Activated CD4-positive, alpha-beta T cell treated with anti-CD3 and anti-CD28 coated beads for 36 hours (primary cell): ENCODE measurements at regions of chr18 and their contacts with region 1.

Region 1: DNA sequence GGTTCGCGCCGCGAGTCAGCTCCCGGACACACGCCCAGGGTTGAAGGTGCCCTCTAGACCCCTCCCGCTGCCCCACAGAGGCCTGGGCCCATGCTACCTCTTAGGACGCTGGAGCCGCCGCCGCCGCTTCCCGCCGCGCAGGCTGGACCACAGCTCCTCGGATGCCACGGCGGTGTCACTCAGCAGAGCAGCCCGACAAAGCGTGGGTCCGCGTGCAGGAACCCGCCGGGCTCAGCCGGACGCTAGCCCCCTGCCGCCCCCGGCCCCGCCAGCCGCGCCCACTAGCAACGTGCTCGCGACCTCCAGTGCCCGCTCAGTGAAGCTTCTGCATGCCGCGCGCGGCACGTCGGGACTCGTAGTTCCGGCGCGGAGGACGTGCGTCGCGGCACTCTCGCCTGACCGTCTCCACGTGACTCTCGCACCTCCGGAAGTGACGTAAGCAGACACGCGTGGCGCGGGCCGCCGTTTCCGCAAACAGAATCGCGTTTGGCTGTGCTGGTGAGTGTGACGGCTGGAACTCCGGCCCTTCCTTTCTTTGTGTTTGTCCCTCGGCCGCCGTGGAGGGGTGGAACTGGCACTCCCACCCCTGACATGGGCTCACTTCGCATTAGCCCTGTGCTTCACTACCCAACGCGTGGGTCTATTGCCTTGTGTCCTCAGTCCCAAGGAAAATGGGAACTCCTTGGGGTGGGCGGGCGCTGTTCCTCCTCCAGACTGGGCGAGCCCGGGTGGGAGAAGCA is at the starts of genes FAM210A and RNMT:
- DNase-seq: peak; percentile 97
- ATAC-seq: peak; percentile 94
- H3K4me3 Mint-ChIP-seq: peak within 1 kb of the TSS; percentile 84
- H3K27ac Mint-ChIP-seq: peak within 1 kb of the TSS; percentile 96
- H3K4me1 Mint-ChIP-seq: peaks cover 50% of the 10 kb centered on the region
- H3K27me3 Mint-ChIP-seq: no peaks in the 10 kb centered on the region
- total RNA-seq, gene FAM210A: 46.8 to 56.4 TPM
- total RNA-seq, gene RNMT: 61.2 to 64.3 TPM

Region 2: GRCh38 chr18:12702221-12703095 is 1023.9 kb before region 1 on chr18 and contains the starts of genes CEP76 and PSMG2:
- CTCF ChIA-PET with region 1: no interaction called
- POLR2A ChIA-PET with region 1: no interaction called
- intact Hi-C with region 1: loop called in 1 of 2 experiments (anchors 2 kb)
- DNase-seq: peak; percentile 90
- ATAC-seq: peak; percentile 85
- H3K4me3 Mint-ChIP-seq: peak within 1 kb of the TSS; percentile 96
- H3K27ac Mint-ChIP-seq: peak within 1 kb of the TSS; percentile 96
- H3K4me1 Mint-ChIP-seq: peaks cover 30% of the 10 kb centered on the region
- H3K27me3 Mint-ChIP-seq: no peaks in the 10 kb centered on the region
- total RNA-seq, gene CEP76: 12.5 to 13.9 TPM
- total RNA-seq, gene PSMG2: 113 to 118 TPM

Region 3: DNA sequence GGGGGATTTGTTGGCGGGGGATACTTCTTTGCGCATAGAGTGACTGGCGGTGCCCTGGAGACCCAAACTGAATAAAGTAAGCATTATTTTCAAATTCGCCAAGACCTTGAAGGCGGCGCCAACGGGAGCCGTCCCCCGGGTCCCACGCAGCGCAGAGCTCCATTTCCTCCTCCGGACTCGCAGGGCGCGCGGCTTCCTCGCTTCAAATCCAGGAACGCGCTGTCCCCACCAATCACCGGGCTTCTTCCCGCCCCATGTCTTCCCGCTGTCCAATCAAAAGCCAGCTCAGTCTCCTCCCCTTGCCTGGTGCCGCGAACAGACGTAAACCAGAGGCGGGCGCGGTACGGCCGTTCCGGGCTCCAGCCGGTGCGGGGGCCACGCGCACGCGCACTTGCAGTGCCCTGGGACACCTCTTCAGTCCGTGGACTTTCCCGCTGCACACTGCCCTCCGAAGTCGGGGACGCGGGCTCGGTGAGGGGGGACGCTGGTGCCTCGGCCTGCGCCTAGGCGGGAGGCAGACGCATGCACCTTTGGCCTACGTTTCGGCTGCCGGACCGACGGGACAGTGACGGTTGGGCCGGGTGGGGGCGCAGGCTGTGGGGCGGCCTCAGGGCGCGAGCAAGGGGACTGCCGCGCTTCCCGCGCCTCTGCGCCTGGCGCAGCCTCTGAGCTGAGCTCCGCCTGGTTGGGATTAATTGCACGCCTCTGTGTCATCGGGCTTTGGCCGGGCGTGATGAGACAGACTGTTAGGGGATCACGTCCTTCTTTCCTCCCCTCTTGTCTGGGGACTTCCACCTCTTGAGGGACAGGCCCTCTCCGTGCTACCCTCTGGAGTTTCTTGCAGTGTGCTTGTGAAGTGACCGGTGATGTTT is 735.2 kb before region 1 on chr18 and contains the start of gene CEP192:
- CTCF ChIA-PET with region 1: no interaction called
- POLR2A ChIA-PET with region 1: no interaction called
- intact Hi-C with region 1: loop called in 1 of 2 experiments (anchors 1 kb)
- DNase-seq: peak; percentile 98
- ATAC-seq: peak; percentile 90
- H3K4me3 Mint-ChIP-seq: peak within 1 kb of the TSS; percentile 87
- H3K27ac Mint-ChIP-seq: peak within 1 kb of the TSS; percentile 93
- H3K4me1 Mint-ChIP-seq: peaks cover 21% of the 10 kb centered on the region
- H3K27me3 Mint-ChIP-seq: no peaks in the 10 kb centered on the region
- total RNA-seq, gene CEP192: 36.0 to 39.3 TPM

Region 4: GRCh38 chr18:13216092-13216582 is 510.3 kb before region 1 on chr18:
- CTCF ChIA-PET with region 1: interaction called, 4 read pairs
- POLR2A ChIA-PET with region 1: no interaction called
- intact Hi-C with region 1: loop called (anchors 1 to 2 kb)
- DNase-seq: peak; percentile 79
- ATAC-seq: peak; percentile 70
- H3K4me3 Mint-ChIP-seq: peak overlapping the region; percentile 77
- H3K27ac Mint-ChIP-seq: no peak overlapping the region
- H3K4me1 Mint-ChIP-seq: peaks cover 27% of the 10 kb centered on the region
- H3K27me3 Mint-ChIP-seq: peaks cover 15% of the 10 kb centered on the region

Region 5: GRCh38 chr18:13302457-13303225 is 423.8 kb before region 1 on chr18:
- CTCF ChIA-PET with region 1: no interaction called
- POLR2A ChIA-PET with region 1: no interaction called
- intact Hi-C with region 1: no loop called
- DNase-seq: no peak
- ATAC-seq: no peak
- H3K4me3 Mint-ChIP-seq: no peak overlapping the region
- H3K27ac Mint-ChIP-seq: no peak overlapping the region
- H3K4me1 Mint-ChIP-seq: peaks cover 19% of the 10 kb centered on the region
- H3K27me3 Mint-ChIP-seq: no peaks in the 10 kb centered on the region

Region 6: DNA sequence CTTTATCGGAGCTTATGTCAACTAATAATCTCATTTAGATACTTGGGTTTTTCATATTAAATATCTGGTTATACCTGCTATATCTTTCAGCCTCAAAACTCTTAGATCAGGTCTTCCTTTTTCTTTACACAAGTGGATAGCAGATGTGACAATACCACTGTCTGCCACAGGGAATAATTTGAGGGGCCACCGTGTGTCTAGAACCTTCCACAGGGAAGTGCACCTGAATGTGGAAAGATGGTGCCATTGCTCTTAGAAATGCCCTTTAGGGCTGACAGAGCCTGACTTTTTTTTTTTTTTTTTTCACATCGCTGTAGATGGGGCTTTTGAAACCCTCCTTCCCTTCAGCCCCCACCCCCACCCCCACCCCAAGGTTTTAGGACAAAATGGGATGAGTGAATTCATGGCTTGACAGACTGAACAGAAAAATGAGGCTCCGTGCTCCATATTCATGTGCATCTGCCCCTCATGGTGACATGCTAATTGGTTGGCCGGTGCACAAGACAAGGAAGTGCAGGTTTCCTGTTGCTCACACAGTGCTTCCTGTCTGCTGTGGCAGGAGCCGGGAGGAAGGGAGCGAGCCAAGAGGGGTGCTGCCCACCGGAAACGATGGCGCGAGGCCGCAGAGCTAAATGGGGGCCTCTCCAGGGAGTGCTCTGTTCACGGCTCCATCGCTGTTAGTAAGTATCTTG is 261.8 kb before region 1 on chr18:
- CTCF ChIA-PET with region 1: no interaction called
- POLR2A ChIA-PET with region 1: no interaction called
- intact Hi-C with region 1: loop called in 1 of 2 experiments (anchors 1 kb)
- DNase-seq: peak; percentile 79
- ATAC-seq: peak; percentile 91
- H3K4me3 Mint-ChIP-seq: peak overlapping the region; percentile 83
- H3K27ac Mint-ChIP-seq: peak overlapping the region; percentile 92
- H3K4me1 Mint-ChIP-seq: peaks cover 51% of the 10 kb centered on the region
- H3K27me3 Mint-ChIP-seq: no peaks in the 10 kb centered on the region

Region 7: DNA sequence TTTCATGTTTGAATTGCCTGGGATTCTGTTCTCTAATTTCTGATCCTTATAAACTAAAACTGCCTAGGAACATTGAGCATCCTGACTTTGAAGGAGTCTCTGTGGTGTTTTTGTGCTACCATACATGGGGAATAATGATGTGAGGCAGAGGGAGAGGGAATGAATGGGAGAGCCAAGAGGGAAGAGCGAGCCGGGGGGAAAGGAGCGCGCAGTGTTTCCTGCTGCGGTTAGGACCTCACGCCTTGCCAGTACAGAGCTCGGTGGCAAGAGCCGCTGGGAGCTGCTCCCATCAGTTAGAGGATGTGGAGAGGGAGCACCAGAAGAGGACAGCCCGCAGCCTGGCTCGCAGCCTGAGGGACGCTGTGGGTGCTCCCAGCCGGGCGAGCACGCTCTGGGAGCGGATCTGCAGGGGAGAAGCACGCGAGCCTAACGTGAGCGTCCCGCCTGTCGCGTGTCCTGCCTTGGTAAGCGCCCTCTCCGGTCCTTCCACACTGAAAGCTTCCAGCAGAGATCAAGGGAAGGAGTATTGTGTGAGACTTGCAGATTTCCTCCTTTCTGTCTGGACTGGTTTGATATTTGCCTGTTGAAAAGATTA is 114.7 kb before region 1 on chr18:
- CTCF ChIA-PET with region 1: no interaction called
- POLR2A ChIA-PET with region 1: no interaction called
- intact Hi-C with region 1: loop called in 1 of 2 experiments (anchors 1 kb)
- DNase-seq: peak; percentile 46
- ATAC-seq: peak; percentile 4
- H3K4me3 Mint-ChIP-seq: peak overlapping the region; percentile 72
- H3K27ac Mint-ChIP-seq: peak overlapping the region; percentile 87
- H3K4me1 Mint-ChIP-seq: peaks cover 84% of the 10 kb centered on the region
- H3K27me3 Mint-ChIP-seq: no peaks in the 10 kb centered on the region

Region 8: GRCh38 chr18:13775058-13775457 is 48.7 kb after region 1 on chr18:
- CTCF ChIA-PET with region 1: no interaction called
- POLR2A ChIA-PET with region 1: no interaction called
- intact Hi-C with region 1: no loop called
- DNase-seq: no peak
- ATAC-seq: no peak
- H3K4me3 Mint-ChIP-seq: no peak overlapping the region
- H3K27ac Mint-ChIP-seq: no peak overlapping the region
- H3K4me1 Mint-ChIP-seq: no peaks in the 10 kb centered on the region
- H3K27me3 Mint-ChIP-seq: peaks cover 10% of the 10 kb centered on the region

Region 9: DNA sequence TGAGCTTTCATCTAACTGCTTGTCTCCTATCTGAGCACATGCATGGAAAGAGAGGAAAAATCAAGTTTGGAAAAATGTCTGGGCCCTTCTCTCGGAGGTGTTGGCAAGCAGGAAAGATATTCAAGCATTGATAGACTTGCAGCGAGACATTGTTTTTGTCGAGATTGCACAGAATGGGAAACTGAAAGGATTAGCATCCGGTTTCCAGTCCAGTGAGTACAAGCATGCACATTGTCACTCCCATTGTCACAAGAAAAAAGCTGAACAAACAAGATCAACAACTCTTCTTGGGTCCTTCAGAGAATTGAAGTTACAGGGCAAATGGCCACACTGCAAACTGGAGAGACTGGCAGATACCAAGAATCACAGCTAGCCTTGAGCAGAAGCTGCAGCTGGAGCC is 77.9 kb after region 1 on chr18:
- CTCF ChIA-PET with region 1: no interaction called
- POLR2A ChIA-PET with region 1: no interaction called
- intact Hi-C with region 1: no loop called
- DNase-seq: no peak
- ATAC-seq: no peak
- H3K4me3 Mint-ChIP-seq: no peak overlapping the region
- H3K27ac Mint-ChIP-seq: no peak overlapping the region
- H3K4me1 Mint-ChIP-seq: peaks cover 5% of the 10 kb centered on the region
- H3K27me3 Mint-ChIP-seq: peaks cover 43% of the 10 kb centered on the region

Region 10: DNA sequence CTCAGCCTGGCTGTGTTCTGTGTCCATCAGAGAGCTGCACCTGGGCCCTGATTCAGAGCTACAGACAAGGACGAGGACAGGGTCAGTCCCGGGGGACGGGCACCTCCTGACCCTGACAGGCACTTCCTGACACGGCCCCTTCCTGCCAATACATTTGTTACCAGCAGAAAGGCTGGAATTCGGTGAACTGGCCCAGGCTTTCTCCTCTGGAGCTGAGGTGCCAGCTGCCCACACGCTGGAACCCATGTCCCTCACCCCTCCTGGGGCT is 418.2 kb after region 1 on chr18:
- CTCF ChIA-PET with region 1: no interaction called
- POLR2A ChIA-PET with region 1: no interaction called
- intact Hi-C with region 1: loop called in 1 of 2 experiments (anchors 10 kb)
- DNase-seq: no peak
- ATAC-seq: no peak
- H3K4me3 Mint-ChIP-seq: no peak overlapping the region
- H3K27ac Mint-ChIP-seq: no peak overlapping the region
- H3K4me1 Mint-ChIP-seq: no peaks in the 10 kb centered on the region
- H3K27me3 Mint-ChIP-seq: no peaks in the 10 kb centered on the region